PC-3 (cell line): ENCODE measurements at regions of chr14 and their contacts with region 1.

Region 1: DNA sequence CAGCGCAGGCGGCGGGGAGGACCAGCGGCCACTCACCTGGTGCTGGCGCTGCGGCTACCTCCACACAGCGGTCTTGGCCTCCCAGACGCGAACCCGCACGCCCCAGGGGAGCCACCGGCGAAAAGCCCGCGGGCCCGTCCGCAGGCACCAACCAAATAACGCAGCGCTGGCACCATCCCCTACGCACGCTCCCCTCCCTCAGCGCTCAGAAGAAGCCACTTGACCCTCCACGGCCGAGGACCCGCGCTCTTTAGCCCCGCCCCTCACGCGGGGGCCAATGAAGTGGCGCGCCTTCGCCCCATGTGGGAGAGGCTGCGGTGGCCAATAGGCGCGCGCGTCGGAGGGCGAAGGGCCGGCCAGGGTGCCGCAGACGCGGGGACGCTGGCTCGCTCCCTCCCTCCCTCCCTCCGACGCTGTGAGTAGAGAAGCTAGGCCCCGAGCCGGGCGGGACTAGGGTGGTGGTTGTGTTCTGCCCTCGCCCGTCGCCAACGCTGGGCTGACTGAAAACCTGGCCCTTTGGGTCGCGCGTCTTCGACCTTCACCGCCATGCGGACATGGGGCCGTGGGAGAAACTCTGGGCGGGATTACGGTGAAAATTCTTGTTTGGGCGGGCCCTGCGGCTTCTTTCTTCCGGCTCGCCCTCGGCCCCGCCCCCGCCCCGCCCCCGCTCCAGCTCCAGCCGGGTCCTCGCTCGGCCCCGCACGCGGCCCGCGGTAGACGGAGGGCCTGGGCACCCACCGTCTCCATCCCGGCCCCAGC is at the starts of genes DMAC2L and L2HGDH:
- DNase-seq: peak; percentile 98
- ATAC-seq: peak; percentile 91
- H3K4me3 ChIP-seq: peak within 1 kb of the TSS; percentile 93
- H3K27ac ChIP-seq: peak within 1 kb of the TSS; percentile 77
- H3K4me1 ChIP-seq: peaks cover 18% of the 10 kb centered on the region
- H3K27me3 ChIP-seq: no peaks in the 10 kb centered on the region
- CTCF ChIP-seq: peak; percentile 20
- total RNA-seq, gene DMAC2L: 2.3 and 18.1 TPM in 2 replicates
- total RNA-seq, gene L2HGDH: 27.8 and 41.6 TPM in 2 replicates

Region 2: DNA sequence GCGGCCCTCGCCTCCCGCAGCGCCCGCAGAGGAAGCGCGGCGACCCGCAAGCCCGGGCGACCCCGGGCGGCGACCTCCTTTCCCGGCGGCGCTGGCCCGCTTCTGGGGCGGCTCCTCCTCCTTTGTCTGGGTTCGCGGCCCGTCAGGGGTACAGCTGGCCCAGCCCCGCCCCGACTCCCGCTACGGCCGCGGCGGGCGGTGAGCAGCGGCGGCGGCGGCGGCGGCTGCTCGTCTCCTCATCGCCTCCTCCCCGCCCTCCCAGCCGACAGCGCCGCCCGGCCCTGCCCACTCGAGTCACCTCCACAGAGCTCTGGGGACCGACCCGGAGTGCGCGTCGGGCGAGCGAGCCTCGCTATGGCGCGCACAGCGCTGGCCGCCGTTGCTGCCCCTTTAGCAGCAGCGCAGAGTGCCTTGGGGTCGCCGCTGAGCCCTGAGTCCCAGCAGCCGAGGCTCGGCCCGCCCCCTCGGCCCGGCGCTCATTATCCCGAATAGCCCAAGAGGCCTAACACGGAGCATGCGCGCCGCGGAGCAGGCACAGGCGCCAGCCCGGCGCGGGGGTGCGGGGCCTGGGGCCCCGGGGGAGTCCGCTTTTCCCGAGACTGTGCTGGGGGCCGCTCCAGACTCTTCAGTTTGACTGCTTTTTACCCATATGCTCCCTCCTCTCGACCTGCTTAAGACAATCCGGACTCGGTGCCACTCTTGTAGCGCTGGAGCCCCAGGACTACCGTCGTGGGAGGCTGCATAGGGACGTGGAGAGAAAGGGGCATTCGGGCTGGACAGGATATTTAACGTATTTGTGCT is 80.5 kb before region 1 on chr14 and contains the start of gene SOS2:
- CTCF ChIA-PET with region 1: no interaction called
- POLR2A ChIA-PET with region 1: no interaction called
- intact Hi-C with region 1: loop called (anchors 2 kb)
- DNase-seq: peak; percentile 78
- ATAC-seq: peak; percentile 83
- H3K4me3 ChIP-seq: peak within 1 kb of the TSS; percentile 93
- H3K27ac ChIP-seq: peak within 1 kb of the TSS; percentile 18
- H3K4me1 ChIP-seq: peaks cover 34% of the 10 kb centered on the region
- H3K27me3 ChIP-seq: no peaks in the 10 kb centered on the region
- CTCF ChIP-seq: 0 out of 2 replicates have a peak, but pooled peaks have one; percentile 11
- total RNA-seq, gene SOS2: 9.1 and 9.9 TPM in 2 replicates